ENCODE measurements at regions of chr3 and their contacts with region 1.

Region 1: DNA sequence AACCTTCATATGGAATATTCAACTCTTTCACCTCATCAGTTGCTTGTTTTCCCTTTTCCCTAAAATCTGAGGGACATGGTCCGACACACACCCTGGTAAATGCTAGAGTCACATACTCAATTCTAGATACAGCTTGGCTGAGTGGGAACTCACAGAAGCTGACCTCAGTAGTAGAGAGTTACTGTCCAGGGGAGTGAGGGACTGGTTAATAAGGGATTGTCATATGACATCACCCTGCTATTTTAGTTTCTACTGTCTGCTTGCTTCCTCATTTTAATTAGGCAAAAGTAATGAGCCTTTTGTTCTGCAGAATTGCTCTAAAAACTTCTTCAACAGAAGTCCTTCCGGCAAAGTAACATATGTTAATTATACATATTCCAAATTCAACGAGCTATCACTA is 244.5 kb downstream of the ZIC4 start:
- DNase-seq: no peak
- ATAC-seq: no peak
- H3K4me3 ChIP-seq: no peak overlapping the region
- H3K4me3 Mint-ChIP-seq: no peak overlapping the region
- H3K27ac ChIP-seq: no peak overlapping the region
- H3K27ac Mint-ChIP-seq: no peak overlapping the region
- H3K4me1 ChIP-seq: no peaks in the 10 kb centered on the region
- H3K4me1 Mint-ChIP-seq: no peaks in the 10 kb centered on the region
- H3K27me3 ChIP-seq: no peaks in the 10 kb centered on the region
- H3K27me3 Mint-ChIP-seq: no peaks in the 10 kb centered on the region

Region 2: GRCh38 chr3:147201086-147201485 is 39.3 kb after region 1 on chr3:
- CTCF ChIA-PET with region 1: no interaction called
- POLR2A ChIA-PET with region 1: no interaction called
- intact Hi-C with region 1: loop called in 1 of 2 experiments (anchors 1 kb)
- DNase-seq: no peak
- ATAC-seq: no peak
- H3K4me3 ChIP-seq: no peak overlapping the region
- H3K4me3 Mint-ChIP-seq: no peak overlapping the region
- H3K27ac ChIP-seq: no peak overlapping the region
- H3K27ac Mint-ChIP-seq: no peak overlapping the region
- H3K4me1 ChIP-seq: no peaks in the 10 kb centered on the region
- H3K4me1 Mint-ChIP-seq: no peaks in the 10 kb centered on the region
- H3K27me3 ChIP-seq: no peaks in the 10 kb centered on the region
- H3K27me3 Mint-ChIP-seq: no peaks in the 10 kb centered on the region